Ovary (tissue), 10 donors: ENCODE measurements at regions of chr21 and their contacts with region 1.

Region 1: DNA sequence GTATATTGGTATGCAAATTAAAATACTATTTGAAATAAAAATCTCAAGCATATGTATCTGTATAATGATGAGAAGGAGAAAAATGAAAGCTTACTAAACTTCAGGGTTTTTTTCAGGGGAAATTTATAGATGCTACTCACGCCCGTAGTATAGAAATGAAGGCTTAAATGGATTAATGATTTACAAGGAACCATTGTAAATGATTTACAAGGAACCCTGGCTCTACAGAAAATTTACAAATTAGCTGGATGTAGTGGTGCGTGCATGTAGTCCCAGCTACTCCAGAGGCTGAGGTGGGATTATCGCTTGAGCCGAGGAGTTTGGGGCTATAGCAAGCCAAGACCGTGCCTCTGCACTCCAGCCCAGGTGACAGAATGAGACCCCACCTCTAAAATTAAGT is 150.5 kb downstream of the PCBP3 start:
- DNase-seq: no peak
- H3K4me3 ChIP-seq: no peak overlapping the region
- H3K27ac ChIP-seq: no peak overlapping the region
- H3K4me1 ChIP-seq: no peaks in the 10 kb centered on the region
- H3K27me3 ChIP-seq: no peaks in the 10 kb centered on the region
- CTCF ChIP-seq: no peak
- EP300 ChIP-seq: no peak
- POLR2A ChIP-seq: no peak

Region 2: GRCh38 chr21:45655124-45655523 is 138.9 kb before region 1 on chr21:
- intact Hi-C with region 1: loop called in 1 of 4 experiments (anchors 5 kb)
- DNase-seq: no peak
- H3K4me3 ChIP-seq: no peak overlapping the region
- H3K27ac ChIP-seq: no peak overlapping the region
- H3K4me1 ChIP-seq: no peaks in the 10 kb centered on the region
- H3K27me3 ChIP-seq: no peaks in the 10 kb centered on the region
- CTCF ChIP-seq: no peak
- EP300 ChIP-seq: no peak
- POLR2A ChIP-seq: no peak